ENCODE measurements at regions of chr12 and their contacts with region 1.

Region 1: GRCh38 chr12:123232807-123233543 is at the starts of genes MPHOSPH9 and MTRFR:
- DNase-seq: peak; percentile 98 to 99
- ATAC-seq: peak; percentile 95
- total RNA-seq, gene MPHOSPH9: 12.3 to 19.8 TPM
- total RNA-seq, gene MTRFR: 9.2 to 9.6 TPM

Region 2: DNA sequence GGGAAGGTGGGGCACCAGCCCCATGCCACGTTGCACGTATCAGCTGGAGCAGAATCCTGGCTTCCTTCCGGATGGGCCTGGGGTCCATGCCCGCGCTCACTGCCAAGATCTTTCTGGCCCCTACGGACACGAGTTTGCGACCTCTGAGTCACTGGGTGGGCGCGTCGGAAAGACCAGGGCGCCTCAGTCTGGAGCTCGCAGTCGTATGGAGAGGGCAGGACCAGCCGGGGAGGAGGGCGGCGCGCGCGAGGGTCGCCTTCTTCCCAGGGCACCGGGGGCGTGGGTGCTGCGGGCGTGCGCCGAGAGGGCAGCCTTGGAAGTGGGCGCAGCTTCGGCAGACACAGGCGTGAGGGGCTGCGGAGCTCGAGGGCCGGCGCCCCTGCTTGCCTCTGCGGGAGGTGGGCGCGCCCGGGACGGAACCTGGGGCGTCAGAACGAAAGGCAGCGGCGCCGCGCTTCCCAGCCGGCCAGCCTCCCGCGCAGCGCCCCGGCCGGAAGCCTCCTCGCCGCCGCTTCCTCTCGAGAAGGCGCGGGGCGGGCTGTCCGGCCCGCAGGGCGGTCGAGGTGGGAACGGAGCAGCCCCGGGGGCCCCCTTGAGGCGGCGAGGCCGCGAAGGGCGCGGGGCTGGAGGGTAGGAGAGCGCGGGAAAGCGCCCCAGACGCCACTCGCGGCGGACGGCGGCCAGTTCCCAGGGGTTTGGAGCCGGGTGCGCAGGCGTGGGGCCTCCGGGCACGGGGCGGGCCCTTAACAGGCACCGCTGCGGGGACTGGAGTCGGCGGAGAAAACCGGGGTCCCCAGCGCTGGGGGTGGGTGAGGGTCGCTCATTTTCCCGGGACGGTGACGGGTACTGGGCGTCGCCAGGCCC is 252.6 kb before region 1 on chr12 and contains the start of gene ARL6IP4:
- intact Hi-C with region 1: loop called in 1 of 2 experiments (anchors 10 kb)
- DNase-seq: peak in 1 of 2 donors; percentile 79
- ATAC-seq: peak; percentile 78
- total RNA-seq, gene ARL6IP4: 136 to 158 TPM

Region 3: DNA sequence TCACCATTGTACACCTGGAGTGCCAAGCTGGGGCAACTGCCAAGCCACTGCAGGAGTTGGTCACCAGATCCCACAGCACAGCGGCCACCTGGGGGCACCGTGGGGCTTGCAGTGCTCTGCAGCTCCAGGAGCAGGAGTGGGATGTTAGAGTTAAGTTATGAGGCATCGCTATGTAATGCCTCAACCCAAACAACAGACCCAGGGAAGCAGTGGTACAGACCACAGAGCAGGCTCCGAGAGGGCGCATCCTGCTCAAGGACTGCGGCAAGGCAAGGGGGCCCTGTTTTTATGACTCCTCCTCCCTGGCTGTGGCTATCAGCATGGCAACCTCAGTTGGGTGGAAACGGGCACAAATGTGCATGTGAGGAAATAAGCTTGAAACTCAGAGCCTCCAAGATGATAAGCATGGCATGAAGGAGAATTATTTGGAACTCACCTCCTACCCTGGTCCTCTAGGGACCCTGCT is 189.4 kb before region 1 on chr12:
- intact Hi-C with region 1: loop called in 1 of 2 experiments (anchors 10 kb)
- DNase-seq: peak; percentile 81 to 89
- ATAC-seq: peak; percentile 95